Calu3 (cell line): ENCODE measurements at regions of chr14 and their contacts with region 1.

Region 1: DNA sequence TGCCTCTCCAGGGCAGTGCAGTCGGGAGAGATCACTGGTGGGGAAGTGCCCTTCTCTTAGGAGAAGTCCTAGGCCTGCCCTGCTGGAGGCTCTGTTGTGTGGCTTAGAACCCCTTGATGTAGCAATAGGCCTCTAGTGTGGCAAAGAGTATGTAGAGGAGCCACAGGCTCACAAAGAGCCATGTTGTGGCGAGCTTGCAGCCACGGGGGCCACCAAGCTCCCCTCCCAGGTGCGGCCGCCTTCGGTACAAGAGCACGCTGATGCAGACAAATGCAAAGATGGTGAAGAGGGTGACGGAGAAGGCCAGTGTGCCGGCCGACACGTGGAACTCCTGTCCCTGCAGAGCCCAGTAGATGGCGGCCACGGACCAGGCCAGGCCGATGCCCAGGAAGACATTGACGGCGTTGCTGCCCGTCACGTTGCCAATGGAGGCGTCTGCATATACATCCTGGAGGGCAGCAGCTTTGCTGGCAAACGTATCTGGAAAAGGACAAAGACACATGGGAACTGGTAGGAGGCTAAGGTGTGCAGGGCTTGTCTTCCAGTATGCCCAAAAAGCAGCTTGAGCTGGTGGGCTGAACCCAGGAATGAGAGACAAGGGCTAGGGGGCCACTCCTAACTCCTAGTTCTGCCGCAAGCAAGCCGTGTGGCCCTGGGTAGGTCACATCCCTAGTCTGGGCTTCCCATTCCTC is 142.8 kb downstream of the SLC8A3 start:
- DNase-seq: peak; percentile 90
- H3K4me3 Mint-ChIP-seq: no peak overlapping the region
- H3K27ac Mint-ChIP-seq: peak overlapping the region; percentile 9
- H3K4me1 Mint-ChIP-seq: peaks cover 41% of the 10 kb centered on the region
- H3K27me3 Mint-ChIP-seq: peaks cover 16% of the 10 kb centered on the region
- CTCF ChIP-seq: peak; percentile 76

Region 2: GRCh38 chr14:69827560-69827959 is 218.4 kb before region 1 on chr14:
- CTCF ChIA-PET with region 1: no interaction called
- intact Hi-C with region 1: no loop called
- DNase-seq: no peak
- H3K4me3 Mint-ChIP-seq: no peak overlapping the region
- H3K27ac Mint-ChIP-seq: no peak overlapping the region
- H3K4me1 Mint-ChIP-seq: no peaks in the 10 kb centered on the region
- H3K27me3 Mint-ChIP-seq: no peaks in the 10 kb centered on the region
- CTCF ChIP-seq: no peak

Region 3: DNA sequence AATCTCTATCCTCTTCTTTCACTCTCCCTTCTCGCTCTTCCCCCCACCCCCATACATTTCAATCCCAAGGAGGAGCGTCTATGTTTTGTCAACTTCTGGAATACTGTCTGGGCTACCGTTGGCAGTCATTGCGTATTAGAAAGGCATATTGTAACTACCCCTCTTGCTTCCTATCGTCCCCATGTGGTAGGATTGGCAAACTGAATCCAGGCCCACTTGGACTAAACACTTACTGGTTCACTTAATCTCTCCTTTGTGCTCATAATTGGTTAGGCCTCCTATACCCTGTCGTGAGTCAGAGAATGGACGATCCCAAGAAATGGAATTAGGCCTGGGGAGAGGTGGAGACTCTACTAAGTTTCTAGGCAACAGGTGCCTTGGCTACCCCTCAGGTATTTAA is 211.5 kb after region 1 on chr14:
- CTCF ChIA-PET with region 1: no interaction called
- intact Hi-C with region 1: loop called (anchors 2 kb)
- DNase-seq: peak; percentile 68
- H3K4me3 Mint-ChIP-seq: no peak overlapping the region
- H3K27ac Mint-ChIP-seq: no peak overlapping the region
- H3K4me1 Mint-ChIP-seq: no peaks in the 10 kb centered on the region
- H3K27me3 Mint-ChIP-seq: peaks cover 57% of the 10 kb centered on the region
- CTCF ChIP-seq: peak; percentile 15